Heart left ventricle (tissue), 16 donors: ENCODE measurements at regions of chr9 and their contacts with region 1.

Region 1: DNA sequence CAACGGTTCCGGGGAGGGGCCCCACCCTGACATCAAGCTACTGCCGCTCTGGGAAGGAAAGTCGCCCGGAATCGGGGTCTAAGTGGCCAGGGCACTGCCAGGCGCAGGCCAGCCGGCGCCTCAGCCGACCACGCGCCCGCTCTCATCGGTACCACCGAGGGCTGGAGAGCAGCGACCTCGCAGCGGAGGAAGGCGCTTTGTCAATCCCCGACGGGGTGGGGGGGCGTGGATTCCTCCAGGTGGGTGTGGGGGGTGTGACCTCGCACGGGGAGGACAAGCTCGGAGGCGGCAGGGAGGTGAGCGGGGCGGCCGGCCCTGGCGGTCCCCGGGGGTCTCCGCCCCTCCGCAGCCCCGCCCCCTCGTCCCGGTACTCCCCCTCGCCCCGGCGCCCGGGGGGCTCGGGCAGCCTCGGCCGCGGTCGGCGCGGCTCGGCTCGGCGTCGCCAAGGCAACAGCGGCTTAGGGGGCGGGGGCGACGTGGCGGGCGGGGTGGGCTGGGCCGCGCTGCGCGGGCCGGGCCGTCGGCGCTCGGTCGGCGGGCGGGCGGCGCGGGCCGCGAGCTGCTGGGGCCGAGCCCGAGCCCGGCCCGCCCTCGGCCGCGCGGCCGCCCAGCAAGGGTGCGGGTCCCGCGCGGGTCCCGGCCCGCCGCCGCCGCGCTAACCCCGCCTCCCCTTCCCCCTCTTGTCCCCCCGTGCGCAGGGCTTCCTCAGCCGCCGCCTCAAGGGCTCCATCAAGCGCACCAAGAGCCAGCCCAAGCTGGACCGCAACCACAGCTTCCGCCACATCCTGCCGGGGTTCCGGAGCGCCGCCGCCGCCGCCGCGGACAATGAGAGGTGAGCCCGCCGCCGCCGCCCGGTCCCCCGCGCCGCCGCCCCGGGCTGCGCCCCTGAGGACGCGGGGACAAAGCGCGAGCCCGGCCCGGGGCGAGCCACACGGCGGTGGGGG is 47.5 kb downstream of the DAB2IP start:
- DNase-seq: peak; percentile 69 to 85 (median 78)
- ATAC-seq: peak in 3 of 4 donors; percentile 39 to 44 (median 44)
- H3K4me3 ChIP-seq: peak overlapping the region; percentile 19 to 77 (median 58)
- H3K27ac ChIP-seq: peak overlapping the region; percentile 48 to 88 (median 80)
- H3K4me1 ChIP-seq: peaks cover 17 to 61% (median 36%) of the 10 kb centered on the region in 12 donors
- H3K27me3 ChIP-seq: peaks cover 0 to 37% (median 0%) of the 10 kb centered on the region in 9 donors
- CTCF ChIP-seq: no peak
- POLR2A ChIP-seq: no peak

Region 2: DNA sequence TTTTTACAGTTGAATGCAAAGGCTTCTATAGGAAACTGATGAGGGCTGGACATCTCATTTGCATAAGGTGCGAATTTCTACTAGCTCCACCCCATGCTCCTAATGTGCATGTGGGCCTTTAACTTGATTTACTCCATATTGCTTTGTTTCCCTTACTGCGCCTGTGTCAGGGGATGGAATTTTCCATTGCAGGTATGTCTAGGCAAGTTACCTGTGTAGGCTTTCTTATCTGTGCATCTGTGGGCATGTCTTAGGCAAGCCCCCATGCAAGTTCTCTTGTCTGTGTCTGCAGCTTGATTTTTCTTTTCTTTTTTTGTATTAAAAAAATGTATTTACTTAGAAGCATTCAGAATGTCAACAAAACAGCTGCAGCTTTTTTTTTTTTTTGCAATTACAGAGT is 179.9 kb before region 1 on chr9:
- intact Hi-C with region 1: no loop called
- DNase-seq: no peak
- ATAC-seq: no peak
- H3K4me3 ChIP-seq: no peak overlapping the region
- H3K27ac ChIP-seq: no peak overlapping the region
- H3K4me1 ChIP-seq: no peaks in the 10 kb centered on the region
- H3K27me3 ChIP-seq: no peaks in the 10 kb centered on the region
- CTCF ChIP-seq: no peak
- POLR2A ChIP-seq: no peak

Region 3: DNA sequence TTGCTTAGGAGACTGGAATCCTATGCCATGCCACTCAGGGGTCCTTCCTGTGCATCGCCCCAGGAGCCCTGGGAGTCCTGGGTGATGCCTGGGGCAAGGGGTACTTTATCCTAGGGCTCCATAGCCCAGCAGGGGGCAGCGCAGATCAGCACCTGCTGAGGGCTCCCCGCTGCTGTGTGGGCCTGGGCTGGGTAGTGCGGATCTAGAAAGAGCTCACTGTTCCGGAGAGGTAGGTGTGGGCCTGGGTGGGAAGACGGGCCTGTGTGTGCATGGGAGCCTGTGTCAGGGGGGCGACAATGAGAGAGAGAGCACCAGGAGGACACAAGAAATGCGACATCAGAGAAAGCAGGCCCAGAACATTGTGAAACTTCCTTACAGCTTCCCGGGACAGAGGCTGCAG is 58.8 kb before region 1 on chr9:
- intact Hi-C with region 1: loop called in 1 of 10 experiments (anchors 5 kb)
- DNase-seq: peak; percentile 62 to 82 (median 65)
- ATAC-seq: peak; percentile 55 to 81 (median 74)
- H3K4me3 ChIP-seq: no peak overlapping the region
- H3K27ac ChIP-seq: peak overlapping the region in 10 of 12 donors; percentile 36 to 66 (median 55)
- H3K4me1 ChIP-seq: peaks cover 19 to 75% (median 52%) of the 10 kb centered on the region in 12 donors
- H3K27me3 ChIP-seq: no peaks in the 10 kb centered on the region
- CTCF ChIP-seq: peak; percentile 53 to 76 (median 64)
- POLR2A ChIP-seq: no peak

Region 4: DNA sequence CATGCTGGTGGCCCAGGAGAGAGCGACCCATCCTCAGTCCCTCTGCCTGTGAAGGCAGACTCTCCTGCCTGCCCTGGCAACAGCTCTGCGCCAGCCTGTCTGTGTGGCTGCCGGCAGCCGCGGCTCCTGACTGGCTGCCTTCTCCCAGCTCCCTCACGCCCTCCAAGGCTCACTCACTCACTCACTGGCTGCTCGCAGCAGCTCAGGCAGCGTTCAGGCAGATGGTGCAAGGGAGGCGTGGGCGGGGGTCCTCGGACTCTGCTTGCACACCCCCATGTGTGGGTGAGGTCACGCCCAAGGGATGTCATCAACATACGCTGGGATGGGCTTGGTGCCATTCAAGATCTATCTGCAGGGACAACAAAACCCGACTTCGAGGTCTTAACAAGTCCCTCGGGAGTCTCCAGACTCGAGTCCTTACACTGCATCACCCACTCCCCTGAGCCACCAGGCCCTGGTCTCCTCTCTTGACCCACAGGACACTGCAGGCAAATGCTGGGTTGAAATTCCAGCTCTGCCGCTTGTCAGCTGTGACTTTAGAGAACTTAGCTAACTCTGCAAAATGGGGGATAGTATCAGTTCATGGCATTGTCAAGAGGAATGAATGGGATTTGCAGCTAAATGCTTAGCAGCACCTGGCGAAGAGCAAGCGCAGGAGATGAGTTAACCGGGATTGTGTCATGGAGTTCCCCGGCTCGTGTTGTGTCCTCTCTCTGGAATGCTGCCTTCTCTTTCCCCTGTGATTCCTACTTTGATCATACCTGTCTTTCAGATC is 19.4 kb after region 1 on chr9:
- intact Hi-C with region 1: loop called in 1 of 10 experiments (anchors 2 kb)
- DNase-seq: peak in 3 of 5 donors; percentile 57 to 77 (median 68)
- ATAC-seq: peak; percentile 76 to 81 (median 80)
- H3K4me3 ChIP-seq: no peak overlapping the region
- H3K27ac ChIP-seq: peak overlapping the region in 4 of 12 donors; percentile 30 to 47 (median 38)
- H3K4me1 ChIP-seq: peaks cover 15 to 98% (median 79%) of the 10 kb centered on the region in 12 donors
- H3K27me3 ChIP-seq: no peaks in the 10 kb centered on the region
- CTCF ChIP-seq: no peak
- POLR2A ChIP-seq: no peak

Region 5: GRCh38 chr9:121735065-121735789 is 36.3 kb after region 1 on chr9:
- intact Hi-C with region 1: loop called in 3 of 10 experiments (anchors 5 kb)
- DNase-seq: no peak
- ATAC-seq: peak in 3 of 4 donors; percentile 4 to 19 (median 14)
- H3K4me3 ChIP-seq: peak overlapping the region in 9 of 12 donors; percentile 16 to 70 (median 59)
- H3K27ac ChIP-seq: peak overlapping the region; percentile 66 to 99 (median 90)
- H3K4me1 ChIP-seq: peaks cover 21 to 95% (median 84%) of the 10 kb centered on the region in 12 donors
- H3K27me3 ChIP-seq: peaks cover 0 to 10% (median 0%) of the 10 kb centered on the region in 9 donors
- CTCF ChIP-seq: peak; percentile 15 to 53 (median 29)
- POLR2A ChIP-seq: no peak

Region 6: GRCh38 chr9:121744002-121744686 is 45.2 kb after region 1 on chr9:
- intact Hi-C with region 1: loop called in 4 of 10 experiments (anchors 2 to 5 kb)
- DNase-seq: peak in 4 of 5 donors; percentile 70 to 79 (median 75)
- ATAC-seq: peak; percentile 61 to 72 (median 63)
- H3K4me3 ChIP-seq: peak overlapping the region; percentile 15 to 75 (median 56)
- H3K27ac ChIP-seq: peak overlapping the region; percentile 87 to 99 (median 94)
- H3K4me1 ChIP-seq: peaks cover 23 to 99% (median 94%) of the 10 kb centered on the region in 12 donors
- H3K27me3 ChIP-seq: no peaks in the 10 kb centered on the region
- CTCF ChIP-seq: peak; percentile 18 to 78 (median 55)
- POLR2A ChIP-seq: no peak

Region 7: DNA sequence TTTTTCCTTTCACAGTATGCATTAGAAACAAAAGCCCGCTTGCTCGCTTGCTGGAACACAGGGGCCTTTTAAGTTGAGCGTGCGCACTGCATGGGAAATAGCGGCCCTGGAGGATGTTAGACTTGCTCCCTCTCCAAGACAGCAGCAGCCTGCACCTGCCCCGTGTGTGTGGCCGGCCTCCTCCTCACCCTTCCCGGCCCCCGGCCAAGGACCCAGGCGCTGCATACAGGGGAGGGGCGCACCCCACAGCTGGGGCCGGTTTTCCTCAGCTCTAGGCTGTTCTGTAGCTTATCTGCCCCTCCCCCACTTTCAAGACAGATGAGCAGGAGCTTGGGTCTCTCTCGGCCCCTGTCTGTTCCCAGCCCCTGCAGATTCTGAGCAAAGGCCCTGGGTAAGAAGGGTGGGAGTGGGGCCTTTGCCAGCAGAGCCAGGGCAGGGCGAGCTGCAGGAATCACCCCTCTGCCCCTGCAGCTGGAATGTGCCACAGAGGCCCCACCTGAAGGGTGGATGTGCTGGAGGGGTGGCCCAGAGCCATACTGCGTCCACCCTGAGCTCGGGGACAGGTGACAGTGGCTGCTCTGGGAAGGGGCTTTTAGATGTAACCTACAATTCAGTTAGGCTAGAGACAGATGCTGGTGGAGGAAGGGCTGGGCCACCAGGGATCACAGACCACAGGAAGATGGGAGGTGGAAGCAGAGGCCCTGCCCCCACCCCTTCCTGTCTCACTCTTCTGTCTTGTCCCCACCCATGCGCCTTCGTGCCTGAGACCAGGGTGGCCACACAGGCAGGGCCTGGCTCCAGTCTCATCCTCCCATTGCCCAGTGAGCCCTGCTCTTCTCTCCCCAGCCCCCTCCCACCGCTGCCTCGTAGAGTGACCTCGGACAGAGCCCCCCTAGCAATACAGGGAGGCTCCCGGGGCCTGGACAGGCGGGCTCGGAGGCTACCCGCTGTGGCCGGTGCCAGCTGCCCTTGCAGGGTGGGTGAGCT is 84.9 kb after region 1 on chr9:
- intact Hi-C with region 1: loop called in 1 of 10 experiments (anchors 1 kb)
- DNase-seq: peak in 3 of 5 donors; percentile 6 to 58 (median 23)
- ATAC-seq: no peak
- H3K4me3 ChIP-seq: no peak overlapping the region
- H3K27ac ChIP-seq: peak overlapping the region in 1 of 12 donors; percentile 13
- H3K4me1 ChIP-seq: peaks cover 0 to 41% (median 20%) of the 10 kb centered on the region in 12 donors
- H3K27me3 ChIP-seq: no peaks in the 10 kb centered on the region
- CTCF ChIP-seq: no peak
- POLR2A ChIP-seq: no peak

Region 8: GRCh38 chr9:121992571-121993212 is 293.8 kb after region 1 on chr9:
- intact Hi-C with region 1: loop called in 4 of 10 experiments (anchors 5 to 10 kb)
- DNase-seq: peak in 4 of 5 donors; percentile 58 to 71 (median 64)
- ATAC-seq: peak; percentile 61 to 78 (median 69)
- H3K4me3 ChIP-seq: no peak overlapping the region
- H3K27ac ChIP-seq: no peak overlapping the region
- H3K4me1 ChIP-seq: peaks cover 0 to 25% (median 4%) of the 10 kb centered on the region in 12 donors
- H3K27me3 ChIP-seq: no peaks in the 10 kb centered on the region
- CTCF ChIP-seq: peak; percentile 77 to 95 (median 86)
- POLR2A ChIP-seq: no peak